MCF 10A (cell line): ENCODE measurements at regions of chr14 and their contacts with region 1.

Region 1: DNA sequence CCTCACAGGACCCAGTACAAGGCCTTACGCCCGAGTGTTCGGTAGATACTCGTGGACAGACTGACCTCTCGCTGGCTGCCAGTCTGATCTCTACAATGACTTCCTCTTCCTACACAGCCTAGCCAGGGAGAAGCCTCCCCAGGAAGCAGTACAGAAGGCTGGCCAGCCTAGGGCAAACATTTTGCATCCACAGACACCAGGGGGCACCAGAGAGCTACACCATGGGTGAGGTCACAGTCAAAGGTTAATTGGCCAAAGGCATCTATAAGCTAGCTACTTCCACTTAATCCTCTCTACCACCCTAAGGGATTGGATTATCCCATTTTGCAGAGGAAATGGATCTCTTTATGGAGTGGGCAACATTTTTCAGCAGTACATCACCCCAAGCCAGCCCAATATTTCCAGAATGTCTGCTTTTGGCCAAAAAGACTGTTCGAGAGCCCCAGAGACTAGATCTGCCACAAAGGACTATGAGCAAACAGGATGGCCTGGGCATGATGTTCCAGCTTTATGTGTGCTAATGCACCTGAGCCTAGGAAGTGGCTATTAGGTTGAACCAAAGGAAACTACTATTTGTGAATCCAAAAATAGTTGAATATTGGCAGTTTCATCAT is 14.6 kb upstream of the PNMA1 start:
- DNase-seq: peak; percentile 86
- H3K4me3 Mint-ChIP-seq: no peak overlapping the region
- H3K27ac Mint-ChIP-seq: peak overlapping the region; percentile 71
- H3K4me1 Mint-ChIP-seq: peaks cover 33% of the 10 kb centered on the region
- H3K27me3 Mint-ChIP-seq: no peaks in the 10 kb centered on the region
- CTCF ChIP-seq: peak; percentile 91

Region 2: DNA sequence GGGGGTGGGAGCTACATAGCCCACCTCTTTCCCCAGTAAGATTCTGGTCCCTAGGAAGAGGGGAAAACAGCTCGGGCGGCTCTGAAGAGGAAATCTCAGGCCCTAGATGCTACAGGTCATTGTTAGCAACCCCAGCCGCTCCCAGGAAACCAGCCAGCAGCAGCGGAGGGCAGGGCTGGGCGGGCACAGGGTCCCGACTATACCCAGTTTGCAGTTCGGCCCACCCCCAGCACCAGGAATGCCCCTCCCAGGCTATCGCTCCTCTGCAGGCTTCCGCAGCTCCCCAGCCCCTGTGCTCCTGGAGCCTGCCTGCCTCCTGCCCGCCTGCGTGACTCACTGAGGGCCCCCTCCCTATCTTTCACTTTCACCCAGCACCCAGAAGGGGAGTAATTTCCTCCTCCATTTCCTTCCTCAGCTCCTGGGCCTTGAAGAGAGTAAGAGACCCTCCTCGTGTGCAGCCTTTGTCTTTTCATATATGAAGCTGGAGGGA is 12.6 kb after region 1 on chr14:
- CTCF ChIA-PET with region 1: interaction called, 59 read pairs
- POLR2A ChIA-PET with region 1: interaction called, 106 read pairs
- intact Hi-C with region 1: no loop called
- DNase-seq: peak; percentile 84
- H3K4me3 Mint-ChIP-seq: peak overlapping the region; percentile 65
- H3K27ac Mint-ChIP-seq: peak overlapping the region; percentile 92
- H3K4me1 Mint-ChIP-seq: peaks cover 55% of the 10 kb centered on the region
- H3K27me3 Mint-ChIP-seq: no peaks in the 10 kb centered on the region
- CTCF ChIP-seq: no peak

Region 3: DNA sequence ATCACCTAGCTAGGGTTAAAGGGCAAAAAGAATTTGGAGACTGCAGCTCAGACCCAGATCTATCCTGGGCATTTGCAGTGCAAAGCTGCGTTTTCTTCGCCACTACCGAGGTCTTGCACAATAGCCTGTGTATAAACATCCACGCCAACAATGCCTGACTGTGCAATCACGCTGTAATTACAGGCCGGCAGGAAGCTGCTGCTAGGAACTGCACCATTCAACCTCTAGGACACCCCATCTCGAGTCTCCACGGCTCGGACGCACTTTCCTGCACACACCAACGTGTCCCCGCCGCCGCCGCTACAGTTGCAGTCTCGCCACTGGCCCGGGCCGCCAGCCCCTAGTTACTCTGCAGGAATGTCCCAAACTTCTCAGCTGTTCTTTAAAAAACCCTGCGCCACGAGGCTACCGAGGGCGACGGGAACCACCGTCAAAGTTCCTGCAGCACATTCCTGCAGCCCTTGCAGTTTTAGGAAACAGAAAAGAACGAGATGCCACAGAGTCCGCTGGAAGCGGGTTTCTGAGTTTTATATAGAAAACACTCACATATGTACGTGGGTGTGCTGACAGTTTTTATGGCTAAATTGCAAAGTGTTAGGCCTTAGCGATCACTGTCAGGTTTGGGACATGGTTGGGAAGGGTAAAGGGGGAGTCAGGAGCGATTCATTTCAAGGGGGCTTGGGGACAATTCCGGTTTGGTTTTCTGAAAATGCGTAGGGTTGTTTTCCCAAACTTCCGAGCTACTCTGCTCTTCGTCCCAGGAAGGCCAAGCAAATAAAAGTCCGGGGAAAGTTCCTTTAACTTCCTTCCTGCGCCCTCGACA is 57.3 kb after region 1 on chr14:
- CTCF ChIA-PET with region 1: interaction called, 8 read pairs
- POLR2A ChIA-PET with region 1: interaction called, 31 read pairs
- intact Hi-C with region 1: no loop called
- DNase-seq: peak; percentile 93
- H3K4me3 Mint-ChIP-seq: peak overlapping the region; percentile 81
- H3K27ac Mint-ChIP-seq: peak overlapping the region; percentile 78
- H3K4me1 Mint-ChIP-seq: peaks cover 61% of the 10 kb centered on the region
- H3K27me3 Mint-ChIP-seq: no peaks in the 10 kb centered on the region
- CTCF ChIP-seq: no peak

Region 4: DNA sequence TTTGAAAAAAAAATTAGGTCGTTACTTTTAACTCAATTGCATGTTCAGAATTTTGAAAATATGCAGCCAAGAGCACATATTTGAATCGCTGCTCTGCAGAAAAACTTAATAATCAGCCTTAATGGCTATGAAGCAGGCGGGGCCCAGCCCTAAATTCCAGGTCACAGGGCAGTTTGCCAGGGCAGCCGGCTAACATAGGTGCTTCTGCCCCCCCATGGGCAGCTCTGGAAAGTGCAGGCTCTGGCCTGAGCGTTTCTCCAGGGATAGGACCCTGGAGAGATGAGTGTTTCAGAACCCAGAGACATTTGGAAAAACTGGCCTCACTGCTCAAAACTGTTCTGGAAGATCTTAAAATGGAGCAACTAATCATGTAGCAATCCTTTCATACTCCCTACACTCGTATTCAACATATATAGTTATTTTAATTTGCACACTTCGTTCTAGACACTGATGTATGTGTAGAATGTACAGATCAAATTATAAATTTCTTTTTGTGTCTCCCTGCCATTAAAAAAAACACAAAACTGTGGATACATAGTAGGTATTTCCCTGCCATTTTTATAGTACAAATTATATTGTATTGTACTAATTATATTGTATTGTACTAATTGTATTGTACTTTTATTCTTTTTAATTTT is 96.8 kb after region 1 on chr14:
- CTCF ChIA-PET with region 1: interaction called, 68 read pairs
- POLR2A ChIA-PET with region 1: interaction called, 15 read pairs
- intact Hi-C with region 1: loop called (anchors 1 kb)
- DNase-seq: peak; percentile 89
- H3K4me3 Mint-ChIP-seq: no peak overlapping the region
- H3K27ac Mint-ChIP-seq: no peak overlapping the region
- H3K4me1 Mint-ChIP-seq: peaks cover 19% of the 10 kb centered on the region
- H3K27me3 Mint-ChIP-seq: no peaks in the 10 kb centered on the region
- CTCF ChIP-seq: peak; percentile 89

Region 5: GRCh38 chr14:74038015-74038859 is 309.4 kb after region 1 on chr14:
- CTCF ChIA-PET with region 1: no interaction called
- POLR2A ChIA-PET with region 1: no interaction called
- intact Hi-C with region 1: loop called (anchors 2 kb)
- DNase-seq: peak; percentile 65
- H3K4me3 Mint-ChIP-seq: no peak overlapping the region
- H3K27ac Mint-ChIP-seq: no peak overlapping the region
- H3K4me1 Mint-ChIP-seq: no peaks in the 10 kb centered on the region
- H3K27me3 Mint-ChIP-seq: no peaks in the 10 kb centered on the region
- CTCF ChIP-seq: peak; percentile 76